Endothelial cell of umbilical vein (primary cell): ENCODE measurements at regions of chr5 and their contacts with region 1.

Region 1: GRCh38 chr5:142922223-142922952 is 152.2 kb downstream of the ARHGAP26 start:
- DNase-seq: peak; percentile 90
- H3K4me3 ChIP-seq: no peak overlapping the region
- H3K27ac ChIP-seq: peak overlapping the region; percentile 62
- H3K4me1 ChIP-seq: peaks cover 34% of the 10 kb centered on the region
- H3K27me3 ChIP-seq: no peaks in the 10 kb centered on the region
- CTCF ChIP-seq: peak in 1 of 2 donors; percentile 24
- POLR2A ChIP-seq: no peak

Region 2: GRCh38 chr5:142860270-142860669 is 62.1 kb before region 1 on chr5:
- CTCF ChIA-PET with region 1: no interaction called
- POLR2A ChIA-PET with region 1: no interaction called
- dilution Hi-C with region 1: no loop called
- intact Hi-C with region 1: no loop called
- DNase-seq: no peak
- H3K4me3 ChIP-seq: no peak overlapping the region
- H3K27ac ChIP-seq: no peak overlapping the region
- H3K4me1 ChIP-seq: peaks cover 8% of the 10 kb centered on the region
- H3K27me3 ChIP-seq: no peaks in the 10 kb centered on the region
- CTCF ChIP-seq: no peak
- POLR2A ChIP-seq: no peak

Region 3: DNA sequence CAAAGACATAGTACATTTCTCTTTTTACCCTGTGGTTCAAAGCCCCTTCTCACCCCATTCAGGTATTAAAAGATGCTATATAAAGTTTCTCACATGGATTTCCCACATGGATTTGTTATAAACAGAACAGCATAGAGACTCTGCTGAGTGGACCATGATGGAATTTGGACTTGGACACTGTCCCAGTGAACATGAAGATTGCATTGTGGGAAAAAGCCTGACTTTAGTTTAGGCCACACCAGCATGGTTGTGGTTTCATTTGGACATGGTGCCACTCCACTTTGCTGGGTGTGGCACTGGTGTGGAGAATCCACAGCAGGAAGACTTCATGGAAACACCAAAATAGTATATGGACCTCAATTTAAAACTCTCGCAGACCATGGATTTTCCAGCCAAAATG is 27.6 kb before region 1 on chr5:
- CTCF ChIA-PET with region 1: no interaction called
- POLR2A ChIA-PET with region 1: no interaction called
- dilution Hi-C with region 1: no loop called
- intact Hi-C with region 1: no loop called
- DNase-seq: no peak
- H3K4me3 ChIP-seq: no peak overlapping the region
- H3K27ac ChIP-seq: no peak overlapping the region
- H3K4me1 ChIP-seq: peaks cover 4% of the 10 kb centered on the region
- H3K27me3 ChIP-seq: no peaks in the 10 kb centered on the region
- CTCF ChIP-seq: no peak
- POLR2A ChIP-seq: no peak

Region 4: GRCh38 chr5:142959683-142960657 is 37.6 kb after region 1 on chr5:
- CTCF ChIA-PET with region 1: interaction called, 15 read pairs
- POLR2A ChIA-PET with region 1: no interaction called
- dilution Hi-C with region 1: no loop called
- intact Hi-C with region 1: loop called (anchors 1 kb)
- DNase-seq: peak; percentile 36
- H3K4me3 ChIP-seq: no peak overlapping the region
- H3K27ac ChIP-seq: no peak overlapping the region
- H3K4me1 ChIP-seq: peaks cover 2% of the 10 kb centered on the region
- H3K27me3 ChIP-seq: no peaks in the 10 kb centered on the region
- CTCF ChIP-seq: no peak
- POLR2A ChIP-seq: no peak

Region 5: GRCh38 chr5:142981886-142982820 is 59.8 kb after region 1 on chr5:
- CTCF ChIA-PET with region 1: interaction called, 10 read pairs
- POLR2A ChIA-PET with region 1: no interaction called
- dilution Hi-C with region 1: no loop called
- intact Hi-C with region 1: no loop called
- DNase-seq: peak; percentile 75
- H3K4me3 ChIP-seq: peak overlapping the region in 1 of 3 experiments; percentile 5
- H3K27ac ChIP-seq: peak overlapping the region; percentile 62
- H3K4me1 ChIP-seq: peaks cover 62% of the 10 kb centered on the region
- H3K27me3 ChIP-seq: no peaks in the 10 kb centered on the region
- CTCF ChIP-seq: no peak
- POLR2A ChIP-seq: no peak

Region 6: DNA sequence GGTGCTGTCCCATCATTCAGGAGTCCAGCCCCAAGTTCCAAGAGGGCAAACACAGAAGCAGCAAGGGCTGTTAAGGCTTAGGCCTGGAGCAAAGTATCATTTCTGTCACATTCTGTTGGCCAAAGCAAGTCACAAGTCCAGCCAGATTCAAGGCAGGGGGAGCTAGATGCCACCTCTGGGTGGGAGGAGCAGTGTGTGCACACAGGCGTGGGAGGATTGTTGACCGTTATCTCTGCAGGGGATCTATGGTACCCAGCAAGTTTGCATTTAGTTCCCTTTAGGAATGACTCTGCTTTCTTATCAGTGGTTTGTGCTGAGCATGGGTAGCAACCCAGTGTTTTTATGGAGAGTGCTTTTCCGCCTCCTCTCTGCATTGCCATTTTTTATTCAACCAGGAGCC is 202.2 kb after region 1 on chr5:
- CTCF ChIA-PET with region 1: interaction called, 7 read pairs
- POLR2A ChIA-PET with region 1: no interaction called
- dilution Hi-C with region 1: no loop called
- intact Hi-C with region 1: loop called (anchors 5 kb)
- DNase-seq: no peak
- H3K4me3 ChIP-seq: no peak overlapping the region
- H3K27ac ChIP-seq: no peak overlapping the region
- H3K4me1 ChIP-seq: peaks cover 16% of the 10 kb centered on the region
- H3K27me3 ChIP-seq: peaks cover 3 to 7% of the 10 kb centered on the region in 2 experiments
- CTCF ChIP-seq: no peak
- POLR2A ChIP-seq: no peak

Region 7: GRCh38 chr5:143481666-143482531 is 559.5 kb after region 1 on chr5:
- CTCF ChIA-PET with region 1: no interaction called
- POLR2A ChIA-PET with region 1: no interaction called
- dilution Hi-C with region 1: no loop called
- intact Hi-C with region 1: no loop called
- DNase-seq: peak; percentile 3
- H3K4me3 ChIP-seq: no peak overlapping the region
- H3K27ac ChIP-seq: no peak overlapping the region
- H3K4me1 ChIP-seq: no peaks in the 10 kb centered on the region
- H3K27me3 ChIP-seq: no peaks in the 10 kb centered on the region
- CTCF ChIP-seq: no peak
- POLR2A ChIP-seq: no peak

Region 8: GRCh38 chr5:143824851-143825720 is 902.7 kb after region 1 on chr5:
- CTCF ChIA-PET with region 1: interaction called, 29 read pairs
- POLR2A ChIA-PET with region 1: no interaction called
- dilution Hi-C with region 1: no loop called
- intact Hi-C with region 1: loop called (anchors 1 kb)
- DNase-seq: peak; percentile 83
- H3K4me3 ChIP-seq: no peak overlapping the region
- H3K27ac ChIP-seq: no peak overlapping the region
- H3K4me1 ChIP-seq: no peaks in the 10 kb centered on the region
- H3K27me3 ChIP-seq: peaks cover 0 to 2% of the 10 kb centered on the region in 2 experiments
- CTCF ChIP-seq: peak; percentile 84
- POLR2A ChIP-seq: no peak

Region 9: DNA sequence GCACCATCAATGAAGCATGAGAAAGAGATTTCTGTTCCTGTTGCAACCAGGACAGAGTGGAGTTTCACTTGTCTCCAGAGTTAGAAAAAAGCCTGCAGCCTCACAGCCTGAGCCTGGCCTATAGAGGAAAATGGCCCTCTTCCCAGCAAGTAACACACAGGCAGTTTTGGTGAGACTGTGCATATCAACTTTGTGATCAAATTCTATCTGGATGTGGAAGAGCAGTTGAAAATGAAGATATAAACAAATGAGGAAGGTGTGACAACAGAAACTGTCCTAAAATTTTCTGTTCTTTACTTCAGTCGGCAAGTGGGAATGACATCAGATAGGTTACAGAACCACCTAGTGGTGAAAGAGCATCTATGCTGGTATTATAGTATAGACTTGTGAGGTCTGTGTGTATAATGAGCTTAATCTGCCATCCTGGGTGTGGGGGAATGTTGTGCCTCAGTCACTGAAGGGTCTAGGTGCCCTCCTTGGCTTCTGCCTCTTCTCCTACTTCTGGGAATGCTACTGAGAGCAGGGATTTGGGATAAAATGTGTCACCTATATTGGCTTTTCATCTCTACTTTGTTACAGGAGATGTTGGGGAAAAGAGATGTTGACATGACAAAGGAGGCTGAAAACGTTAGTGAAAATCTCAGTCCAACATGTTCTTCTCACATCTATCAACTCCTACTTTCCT is 1219.9 kb after region 1 on chr5:
- CTCF ChIA-PET with region 1: interaction called, 8 read pairs
- POLR2A ChIA-PET with region 1: no interaction called
- dilution Hi-C with region 1: no loop called
- intact Hi-C with region 1: loop called (anchors 10 kb)
- DNase-seq: peak; percentile 68
- H3K4me3 ChIP-seq: no peak overlapping the region
- H3K27ac ChIP-seq: no peak overlapping the region
- H3K4me1 ChIP-seq: peaks cover 29% of the 10 kb centered on the region
- H3K27me3 ChIP-seq: no peaks in the 10 kb centered on the region
- CTCF ChIP-seq: peak; percentile 55 to 71
- POLR2A ChIP-seq: no peak